ENCODE measurements at regions of chr10 and their contacts with region 1.

Region 1: GRCh38 chr10:86366033-86366901 is at the start of gene GRID1:
- DNase-seq: no peak
- H3K4me3 ChIP-seq: peak within 1 kb of the TSS in 2 of 3 experiments; percentile 25 to 26
- H3K27ac ChIP-seq: no peak within 1 kb of the TSS
- H3K4me1 ChIP-seq: peaks cover 12% of the 10 kb centered on the region
- H3K27me3 ChIP-seq: peaks cover 44% of the 10 kb centered on the region
- CTCF ChIP-seq: no peak
- total RNA-seq, gene GRID1: under 0.01 TPM in 1 of 2 donors, not detected in the other

Region 2: GRCh38 chr10:84924131-84924530 is 1442.1 kb before region 1 on chr10:
- CTCF ChIA-PET with region 1: no interaction called
- dilution Hi-C with region 1: no loop called
- in situ Hi-C with region 1: no loop called
- intact Hi-C with region 1: loop called (anchors 5 kb)
- DNase-seq: no peak
- H3K4me3 ChIP-seq: no peak overlapping the region
- H3K27ac ChIP-seq: no peak overlapping the region
- H3K4me1 ChIP-seq: no peaks in the 10 kb centered on the region
- H3K27me3 ChIP-seq: no peaks in the 10 kb centered on the region
- CTCF ChIP-seq: no peak

Region 3: DNA sequence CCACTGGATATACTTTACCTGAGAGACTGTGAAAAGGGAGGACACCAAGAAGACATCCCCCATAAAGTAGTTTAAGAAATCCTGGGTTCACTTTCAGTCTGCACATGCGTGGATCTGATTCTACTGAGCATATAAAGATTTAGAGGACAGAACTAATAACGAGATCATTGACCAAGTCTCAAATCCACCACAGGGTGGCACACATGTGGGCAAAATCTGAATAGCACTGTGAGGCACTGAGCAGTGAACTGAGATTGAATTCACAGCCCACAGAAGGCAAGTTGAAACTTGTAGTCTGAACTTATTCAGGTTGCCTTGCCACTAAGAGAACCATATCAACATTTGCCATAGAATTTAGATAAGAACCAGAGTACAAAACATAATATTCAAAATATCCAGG is 818.2 kb before region 1 on chr10:
- CTCF ChIA-PET with region 1: no interaction called
- dilution Hi-C with region 1: no loop called
- in situ Hi-C with region 1: loop called (anchors 10 to 25 kb)
- intact Hi-C with region 1: loop called (anchors 5 kb)
- DNase-seq: peak; percentile 76
- H3K4me3 ChIP-seq: no peak overlapping the region
- H3K27ac ChIP-seq: no peak overlapping the region
- H3K4me1 ChIP-seq: peaks cover 8% of the 10 kb centered on the region
- H3K27me3 ChIP-seq: no peaks in the 10 kb centered on the region
- CTCF ChIP-seq: peak; percentile 74

Region 4: GRCh38 chr10:85791818-85792532 is 574.3 kb before region 1 on chr10:
- CTCF ChIA-PET with region 1: no interaction called
- dilution Hi-C with region 1: no loop called
- in situ Hi-C with region 1: no loop called
- intact Hi-C with region 1: loop called (anchors 10 kb)
- DNase-seq: no peak
- H3K4me3 ChIP-seq: no peak overlapping the region
- H3K27ac ChIP-seq: no peak overlapping the region
- H3K4me1 ChIP-seq: no peaks in the 10 kb centered on the region
- H3K27me3 ChIP-seq: no peaks in the 10 kb centered on the region
- CTCF ChIP-seq: no peak

Region 5: GRCh38 chr10:85995791-85996190 is 370.5 kb before region 1 on chr10:
- CTCF ChIA-PET with region 1: no interaction called
- dilution Hi-C with region 1: no loop called
- in situ Hi-C with region 1: no loop called
- intact Hi-C with region 1: loop called (anchors 5 kb)
- DNase-seq: peak; percentile 26
- H3K4me3 ChIP-seq: no peak overlapping the region
- H3K27ac ChIP-seq: no peak overlapping the region
- H3K4me1 ChIP-seq: no peaks in the 10 kb centered on the region
- H3K27me3 ChIP-seq: no peaks in the 10 kb centered on the region
- CTCF ChIP-seq: peak; percentile 45 to 53